Prostate gland (tissue), 2 donors: ENCODE measurements at regions of chr5 and their contacts with region 1.

Region 1: GRCh38 chr5:134527146-134527960 is 1.9 kb downstream of the JADE2 start:
- DNase-seq: peak; percentile 76
- H3K4me3 ChIP-seq: peak overlapping the region; percentile 88 to 93
- H3K27ac ChIP-seq: peak overlapping the region; percentile 98 to 99
- H3K4me1 ChIP-seq: peaks cover 4% of the 10 kb centered on the region
- H3K27me3 ChIP-seq: no peaks in the 10 kb centered on the region
- CTCF ChIP-seq: peak; percentile 76 to 95 (median 89)
- POLR2A ChIP-seq: peak; percentile 34

Region 2: GRCh38 chr5:134225618-134226440 is 301.5 kb before region 1 on chr5 and contains the start of gene PPP2CA:
- intact Hi-C with region 1: loop called (anchors 10 kb)
- DNase-seq: peak; percentile 98
- H3K4me3 ChIP-seq: peak within 1 kb of the TSS; percentile 85 to 100
- H3K27ac ChIP-seq: peak within 1 kb of the TSS; percentile 99 to 100
- H3K4me1 ChIP-seq: peaks cover 6% of the 10 kb centered on the region
- H3K27me3 ChIP-seq: no peaks in the 10 kb centered on the region
- CTCF ChIP-seq: no peak
- POLR2A ChIP-seq: peak; percentile 64
- total RNA-seq, gene PPP2CA: 119 to 175 TPM

Region 3: GRCh38 chr5:134370871-134371833 is 156.2 kb before region 1 on chr5 and contains the start of gene UBE2B:
- intact Hi-C with region 1: loop called (anchors 2 kb)
- DNase-seq: peak; percentile 99
- H3K4me3 ChIP-seq: peak within 1 kb of the TSS; percentile 75 to 76
- H3K27ac ChIP-seq: peak within 1 kb of the TSS; percentile 96 to 97
- H3K4me1 ChIP-seq: no peaks in the 10 kb centered on the region
- H3K27me3 ChIP-seq: no peaks in the 10 kb centered on the region
- CTCF ChIP-seq: peak in 2 of 4 experiments; percentile 18 to 23
- POLR2A ChIP-seq: peak; percentile 86
- total RNA-seq, gene UBE2B: 27.4 to 57.7 TPM

Region 4: GRCh38 chr5:134411546-134412266 is 115.6 kb before region 1 on chr5 and contains the start of gene CDKN2AIPNL:
- intact Hi-C with region 1: loop called (anchors 1 kb)
- DNase-seq: peak; percentile 90
- H3K4me3 ChIP-seq: peak within 1 kb of the TSS; percentile 65 to 81
- H3K27ac ChIP-seq: peak within 1 kb of the TSS; percentile 66 to 67
- H3K4me1 ChIP-seq: peaks cover 11% of the 10 kb centered on the region
- H3K27me3 ChIP-seq: no peaks in the 10 kb centered on the region
- CTCF ChIP-seq: peak; percentile 44 to 94 (median 91)
- POLR2A ChIP-seq: peak; percentile 64
- total RNA-seq, gene CDKN2AIPNL: 16.8 to 41.3 TPM

Region 5: GRCh38 chr5:134465816-134466240 is 61.5 kb before region 1 on chr5:
- intact Hi-C with region 1: loop called (anchors 1 kb)
- DNase-seq: peak; percentile 87
- H3K4me3 ChIP-seq: peak overlapping the region; percentile 26 to 40
- H3K27ac ChIP-seq: peak overlapping the region; percentile 88 to 92
- H3K4me1 ChIP-seq: peaks cover 6% of the 10 kb centered on the region
- H3K27me3 ChIP-seq: no peaks in the 10 kb centered on the region
- CTCF ChIP-seq: no peak
- POLR2A ChIP-seq: peak; percentile 68

Region 6: DNA sequence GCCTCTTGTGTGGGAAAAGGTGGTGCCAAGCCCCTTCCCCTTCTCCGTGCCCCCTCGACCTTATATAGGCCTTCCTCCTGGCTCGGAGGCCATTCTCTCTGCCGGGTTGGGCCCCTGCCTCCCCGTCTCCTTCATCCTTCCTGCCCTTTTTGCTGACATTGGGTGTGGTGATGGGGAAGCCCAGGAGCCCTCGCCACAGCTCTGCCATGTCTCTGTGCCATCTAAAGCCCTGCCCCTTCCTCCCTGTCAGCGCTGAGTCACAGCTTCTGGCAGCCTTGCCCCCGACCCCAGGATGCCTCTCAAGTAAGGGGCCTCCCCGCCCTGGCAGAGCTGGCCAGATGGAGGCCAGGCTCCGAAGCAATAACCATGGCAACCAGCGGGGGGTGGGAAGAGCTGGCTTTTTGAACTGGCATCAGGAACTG is 28.5 kb after region 1 on chr5:
- intact Hi-C with region 1: loop called (anchors 2 kb)
- DNase-seq: no peak
- H3K4me3 ChIP-seq: no peak overlapping the region
- H3K27ac ChIP-seq: peak overlapping the region in 1 of 2 donors; percentile 58
- H3K4me1 ChIP-seq: peaks cover 14% of the 10 kb centered on the region
- H3K27me3 ChIP-seq: no peaks in the 10 kb centered on the region
- CTCF ChIP-seq: no peak
- POLR2A ChIP-seq: no peak

Region 7: DNA sequence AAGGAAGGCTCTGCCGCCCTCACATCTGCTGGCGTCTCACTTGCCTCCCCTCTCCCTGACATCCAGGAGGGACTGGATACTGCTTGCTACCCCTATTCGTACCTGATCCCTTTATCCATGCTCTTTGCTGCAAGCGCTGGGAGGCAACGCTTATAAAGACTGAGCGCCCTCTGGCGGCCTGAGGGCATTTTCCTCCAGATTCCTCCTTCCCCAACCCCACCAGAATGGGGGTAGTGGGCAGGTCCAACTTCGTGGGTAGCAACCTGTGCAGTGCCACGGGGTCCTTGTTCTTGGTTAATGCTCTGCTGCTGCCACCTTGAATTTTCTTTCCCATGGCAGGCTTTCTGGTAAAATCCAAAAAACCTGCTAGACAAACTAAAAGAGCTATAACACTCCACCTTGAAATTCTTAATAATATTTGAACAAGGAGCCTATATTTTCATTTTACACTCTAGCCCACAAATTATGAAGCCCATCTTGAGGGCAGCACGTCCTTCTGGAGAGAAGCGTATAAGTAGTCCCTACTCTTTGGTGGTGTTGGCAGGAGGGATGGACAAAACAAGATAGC is 50.5 kb after region 1 on chr5:
- intact Hi-C with region 1: loop called (anchors 2 kb)
- DNase-seq: peak; percentile 78
- H3K4me3 ChIP-seq: no peak overlapping the region
- H3K27ac ChIP-seq: no peak overlapping the region
- H3K4me1 ChIP-seq: no peaks in the 10 kb centered on the region
- H3K27me3 ChIP-seq: no peaks in the 10 kb centered on the region
- CTCF ChIP-seq: peak; percentile 61 to 86 (median 82)
- POLR2A ChIP-seq: no peak

Region 8: GRCh38 chr5:135005076-135005475 is 477.7 kb after region 1 on chr5:
- intact Hi-C with region 1: no loop called
- DNase-seq: no peak
- H3K4me3 ChIP-seq: no peak overlapping the region
- H3K27ac ChIP-seq: no peak overlapping the region
- H3K4me1 ChIP-seq: no peaks in the 10 kb centered on the region
- H3K27me3 ChIP-seq: no peaks in the 10 kb centered on the region
- CTCF ChIP-seq: no peak
- POLR2A ChIP-seq: no peak

Region 9: GRCh38 chr5:135191084-135191826 is 663.9 kb after region 1 on chr5:
- intact Hi-C with region 1: no loop called
- DNase-seq: peak; percentile 73
- H3K4me3 ChIP-seq: peak overlapping the region; percentile 26 to 28
- H3K27ac ChIP-seq: peak overlapping the region; percentile 28 to 69
- H3K4me1 ChIP-seq: no peaks in the 10 kb centered on the region
- H3K27me3 ChIP-seq: no peaks in the 10 kb centered on the region
- CTCF ChIP-seq: peak; percentile 74 to 96 (median 88)
- POLR2A ChIP-seq: no peak